ENCODE measurements at regions of chr16 and their contacts with region 1.

Region 1: DNA sequence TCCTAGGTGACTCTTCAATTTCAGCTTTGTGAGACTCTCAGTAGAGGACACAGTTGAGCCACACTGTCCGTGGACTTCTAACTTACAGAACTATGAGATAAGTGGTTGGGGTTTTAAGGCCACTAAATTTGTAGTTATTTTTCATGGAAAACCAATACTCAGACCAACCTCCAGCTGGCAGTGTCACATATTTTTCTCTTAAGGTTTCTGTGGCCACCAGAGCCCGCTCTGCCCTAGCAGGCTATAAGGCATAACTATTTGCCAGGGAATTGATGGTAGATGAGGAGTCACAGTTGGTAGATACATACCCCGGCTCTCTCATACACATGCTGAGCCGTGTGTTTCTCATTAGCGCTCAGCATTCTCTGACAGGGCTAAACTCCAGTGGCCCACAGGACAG is 336.8 kb upstream of the MON1B start:
- DNase-seq: peak in 2 of 7 donors; percentile 8 to 12
- H3K4me3 ChIP-seq: no peak overlapping the region
- H3K27ac ChIP-seq: no peak overlapping the region
- H3K4me1 ChIP-seq: no peaks in the 10 kb centered on the region
- H3K27me3 ChIP-seq: no peaks in the 10 kb centered on the region
- CTCF ChIP-seq: peak in 5 of 6 experiments; percentile 34 to 48 (median 46)
- POLR2A ChIP-seq: no peak

Region 2: DNA sequence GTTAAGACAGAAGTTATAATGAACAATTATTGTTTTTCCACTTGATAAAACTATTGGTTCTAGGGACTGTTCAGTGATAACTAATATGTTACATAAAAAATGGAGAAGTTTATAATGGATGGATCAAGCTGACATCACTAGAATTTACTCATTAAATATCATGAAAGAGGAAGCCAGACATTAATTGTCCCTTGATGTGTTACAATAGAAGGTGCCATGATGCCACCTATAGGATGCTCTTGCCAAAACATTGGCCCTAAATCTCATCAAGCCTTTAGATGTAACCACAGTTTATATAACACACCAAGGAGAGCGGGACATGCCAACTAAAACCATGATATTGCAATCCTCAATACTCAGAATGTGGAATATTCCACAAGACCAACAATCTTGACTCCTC is 188.8 kb after region 1 on chr16:
- intact Hi-C with region 1: loop called in 1 of 2 experiments (anchors 10 kb)
- DNase-seq: peak in 2 of 7 donors; percentile 13 to 19
- H3K4me3 ChIP-seq: no peak overlapping the region
- H3K27ac ChIP-seq: no peak overlapping the region
- H3K4me1 ChIP-seq: no peaks in the 10 kb centered on the region
- H3K27me3 ChIP-seq: no peaks in the 10 kb centered on the region
- CTCF ChIP-seq: peak in 5 of 6 experiments; percentile 14 to 46 (median 40)
- POLR2A ChIP-seq: no peak